ENCODE measurements at regions of chr6 and their contacts with region 1.

Region 1: GRCh38 chr6:41424370-41425058 is 89.1 kb downstream of the NCR2 start:
- DNase-seq: peak; percentile 31
- ATAC-seq: peak; percentile 71
- H3K4me3 ChIP-seq: no peak overlapping the region
- H3K27ac ChIP-seq: no peak overlapping the region
- H3K4me1 ChIP-seq: peaks cover 10% of the 10 kb centered on the region
- H3K27me3 ChIP-seq: peaks cover 7 to 20% of the 10 kb centered on the region in 2 experiments
- CTCF ChIP-seq: peak; percentile 84 to 87 (median 86)
- EP300 ChIP-seq: no peak
- POLR2A ChIP-seq: no peak
- RAD21 ChIP-seq: peak; percentile 82

Region 2: DNA sequence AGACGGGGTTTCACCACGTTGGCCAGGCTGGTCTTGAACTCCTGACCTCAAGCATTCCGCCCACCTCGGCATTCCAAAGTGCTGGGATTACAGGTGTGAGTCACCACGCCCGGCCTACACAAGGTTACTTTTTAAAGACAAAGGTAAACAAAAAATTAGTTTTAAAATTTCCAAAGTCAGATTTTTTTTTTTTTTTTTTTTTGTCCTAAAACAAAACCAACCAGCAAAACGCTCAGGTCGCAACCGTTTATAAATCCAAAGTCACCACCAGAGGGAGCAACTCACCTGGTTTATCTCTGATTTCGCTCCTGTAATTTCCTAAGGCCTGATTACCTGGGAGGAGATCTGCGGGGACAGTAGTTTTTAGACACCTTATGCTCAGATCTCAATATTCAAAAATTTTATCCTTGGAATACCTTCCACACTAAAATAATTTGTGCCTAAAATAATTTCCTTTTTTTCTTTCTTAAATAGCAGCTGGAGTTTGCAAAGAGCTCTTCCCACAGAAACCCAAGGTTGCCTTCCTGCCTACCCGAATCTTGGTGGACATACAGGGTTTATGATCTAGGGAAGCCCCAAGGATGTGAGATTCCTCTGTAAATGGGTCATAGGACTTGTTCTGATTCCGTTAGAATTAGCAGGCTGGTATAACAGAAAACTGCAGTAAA is 118.2 kb before region 1 on chr6:
- CTCF ChIA-PET with region 1: interaction called, 10 read pairs
- POLR2A ChIA-PET with region 1: interaction called, 3 read pairs
- RAD21 ChIA-PET with region 1: interaction called, 4 read pairs
- SMC1A ChIA-PET with region 1: interaction called, 11 read pairs
- in situ Hi-C with region 1: no loop called
- intact Hi-C with region 1: no loop called
- DNase-seq: no peak
- ATAC-seq: peak; percentile 68
- H3K4me3 ChIP-seq: no peak overlapping the region
- H3K27ac ChIP-seq: no peak overlapping the region
- H3K4me1 ChIP-seq: peaks cover 3% of the 10 kb centered on the region; the same call in 1 of the 2 replicates
- H3K27me3 ChIP-seq: no peaks in the 10 kb centered on the region; a peak in 1 of 4 replicates
- CTCF ChIP-seq: peak; percentile 50 to 66 (median 63)
- EP300 ChIP-seq: no peak
- POLR2A ChIP-seq: no peak
- RAD21 ChIP-seq: peak; percentile 74

Region 3: GRCh38 chr6:41449399-41450245 is 25.1 kb after region 1 on chr6:
- CTCF ChIA-PET with region 1: interaction called, 33 read pairs
- POLR2A ChIA-PET with region 1: interaction called, 5 read pairs
- RAD21 ChIA-PET with region 1: interaction called, 5 read pairs
- SMC1A ChIA-PET with region 1: interaction called, 27 read pairs
- in situ Hi-C with region 1: no loop called
- intact Hi-C with region 1: no loop called
- DNase-seq: no peak
- ATAC-seq: peak; percentile 25; the same call in 2 of the 3 replicates
- H3K4me3 ChIP-seq: no peak overlapping the region
- H3K27ac ChIP-seq: no peak overlapping the region
- H3K4me1 ChIP-seq: no peaks in the 10 kb centered on the region
- H3K27me3 ChIP-seq: 0 out of 4 replicates have a peak, but pooled peaks cover 0 to 1% of the 10 kb centered on the region in 2 experiments
- CTCF ChIP-seq: no peak
- EP300 ChIP-seq: no peak
- POLR2A ChIP-seq: no peak
- RAD21 ChIP-seq: no peak

Region 4: GRCh38 chr6:41463062-41463930 is 38.8 kb after region 1 on chr6:
- CTCF ChIA-PET with region 1: interaction called, 90 read pairs
- POLR2A ChIA-PET with region 1: no interaction called
- RAD21 ChIA-PET with region 1: interaction called, 38 read pairs
- SMC1A ChIA-PET with region 1: interaction called, 10 read pairs
- in situ Hi-C with region 1: no loop called
- intact Hi-C with region 1: loop called (anchors 2 kb)
- DNase-seq: no peak
- ATAC-seq: peak; percentile 99
- H3K4me3 ChIP-seq: no peak overlapping the region
- H3K27ac ChIP-seq: no peak overlapping the region
- H3K4me1 ChIP-seq: no peaks in the 10 kb centered on the region
- H3K27me3 ChIP-seq: peaks cover 0 to 3% of the 10 kb centered on the region in 2 experiments; a peak in 1 of 4 replicates
- CTCF ChIP-seq: peak; percentile 74 to 82 (median 81)
- EP300 ChIP-seq: no peak
- POLR2A ChIP-seq: no peak
- RAD21 ChIP-seq: peak; percentile 96

Region 5: DNA sequence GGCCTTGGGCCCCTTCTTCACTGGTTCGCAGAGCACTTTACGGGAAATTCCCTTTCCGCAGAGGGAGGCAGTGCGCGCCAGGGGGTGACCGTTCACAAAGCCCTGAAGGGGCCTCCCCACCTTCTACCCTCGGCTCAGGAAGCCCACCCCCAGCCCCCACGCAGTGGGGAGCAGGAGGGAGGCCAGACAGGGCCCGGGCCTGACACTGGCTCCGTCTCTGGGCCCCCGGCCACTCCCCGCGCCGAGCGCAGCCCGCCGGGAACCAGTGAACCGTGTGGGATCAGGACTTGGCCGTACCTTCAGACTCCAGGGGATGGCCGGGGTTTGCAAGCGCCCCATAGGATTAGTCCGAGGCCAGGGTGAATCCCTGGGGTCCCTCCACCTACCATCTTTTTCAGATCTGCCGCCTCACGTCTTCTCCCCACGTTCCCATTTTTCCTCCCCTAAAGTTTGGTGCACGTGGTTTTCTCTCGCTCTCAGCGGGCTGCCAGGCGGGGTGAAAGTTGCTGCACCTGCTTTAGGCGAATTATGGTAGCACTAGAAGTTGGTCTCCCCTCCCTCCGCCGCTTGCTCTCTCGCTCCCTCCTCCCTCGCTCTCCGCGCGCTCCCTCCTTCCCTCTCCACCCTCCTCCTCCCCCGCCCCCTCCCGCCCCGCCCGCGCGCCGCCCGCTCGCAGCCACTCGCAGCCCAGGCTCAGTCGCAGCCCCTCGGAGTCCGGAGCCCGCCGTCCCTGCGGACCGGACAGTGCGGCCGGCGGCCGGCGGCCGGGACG is 121.4 kb after region 1 on chr6 and contains the start of gene FOXP4:
- CTCF ChIA-PET with region 1: interaction called, 13 read pairs
- POLR2A ChIA-PET with region 1: interaction called, 5 read pairs
- RAD21 ChIA-PET with region 1: interaction called, 4 read pairs
- SMC1A ChIA-PET with region 1: interaction called, 6 read pairs
- in situ Hi-C with region 1: no loop called
- intact Hi-C with region 1: loop called (anchors 2 kb)
- DNase-seq: peak; percentile 73
- ATAC-seq: peak; percentile 85
- H3K4me3 ChIP-seq: peak within 1 kb of the TSS; percentile 91
- H3K27ac ChIP-seq: peak within 1 kb of the TSS; percentile 74
- H3K4me1 ChIP-seq: peaks cover 16% of the 10 kb centered on the region
- H3K27me3 ChIP-seq: no peaks in the 10 kb centered on the region
- CTCF ChIP-seq: no peak
- EP300 ChIP-seq: no peak
- POLR2A ChIP-seq: peak; percentile 65
- RAD21 ChIP-seq: 0 out of 2 replicates have a peak, but pooled peaks have one; percentile 0
- polyA plus RNA-seq, gene FOXP4: 0.31 to 0.40 TPM

Region 6: GRCh38 chr6:41591859-41592502 is 167.5 kb after region 1 on chr6:
- CTCF ChIA-PET with region 1: interaction called, 19 read pairs
- POLR2A ChIA-PET with region 1: no interaction called
- RAD21 ChIA-PET with region 1: interaction called, 3 read pairs
- SMC1A ChIA-PET with region 1: interaction called, 10 read pairs
- in situ Hi-C with region 1: loop called (anchors 5 kb)
- intact Hi-C with region 1: loop called (anchors 1 kb)
- DNase-seq: peak; percentile 9
- ATAC-seq: peak; percentile 92
- H3K4me3 ChIP-seq: no peak overlapping the region
- H3K27ac ChIP-seq: no peak overlapping the region
- H3K4me1 ChIP-seq: no peaks in the 10 kb centered on the region
- H3K27me3 ChIP-seq: no peaks in the 10 kb centered on the region
- CTCF ChIP-seq: peak; percentile 86 to 96 (median 94); a peak in 5 of 6 replicates
- EP300 ChIP-seq: no peak
- POLR2A ChIP-seq: 0 out of 2 replicates have a peak, but pooled peaks have one; percentile 11
- RAD21 ChIP-seq: peak; percentile 96

Region 7: GRCh38 chr6:41683510-41684310 is 259.2 kb after region 1 on chr6:
- CTCF ChIA-PET with region 1: interaction called, 13 read pairs
- POLR2A ChIA-PET with region 1: no interaction called
- RAD21 ChIA-PET with region 1: interaction called, 3 read pairs
- SMC1A ChIA-PET with region 1: interaction called, 4 read pairs
- in situ Hi-C with region 1: no loop called
- intact Hi-C with region 1: loop called (anchors 2 kb)
- DNase-seq: no peak
- ATAC-seq: peak; percentile 93
- H3K4me3 ChIP-seq: no peak overlapping the region
- H3K27ac ChIP-seq: no peak overlapping the region
- H3K4me1 ChIP-seq: no peaks in the 10 kb centered on the region
- H3K27me3 ChIP-seq: no peaks in the 10 kb centered on the region
- CTCF ChIP-seq: peak; percentile 85 to 93 (median 92)
- EP300 ChIP-seq: no peak
- POLR2A ChIP-seq: peak; percentile 73
- RAD21 ChIP-seq: peak; percentile 72

Region 8: GRCh38 chr6:41813469-41813868 is 389.0 kb after region 1 on chr6:
- CTCF ChIA-PET with region 1: no interaction called
- POLR2A ChIA-PET with region 1: no interaction called
- RAD21 ChIA-PET with region 1: no interaction called
- SMC1A ChIA-PET with region 1: no interaction called
- in situ Hi-C with region 1: no loop called
- intact Hi-C with region 1: no loop called
- DNase-seq: no peak
- ATAC-seq: no peak
- H3K4me3 ChIP-seq: no peak overlapping the region
- H3K27ac ChIP-seq: no peak overlapping the region
- H3K4me1 ChIP-seq: no peaks in the 10 kb centered on the region
- H3K27me3 ChIP-seq: no peaks in the 10 kb centered on the region
- CTCF ChIP-seq: no peak
- EP300 ChIP-seq: no peak
- POLR2A ChIP-seq: no peak
- RAD21 ChIP-seq: no peak

Measured in GM12878 (cell line).